ENCODE measurements at regions of chr18 and their contacts with region 1.

Region 1: DNA sequence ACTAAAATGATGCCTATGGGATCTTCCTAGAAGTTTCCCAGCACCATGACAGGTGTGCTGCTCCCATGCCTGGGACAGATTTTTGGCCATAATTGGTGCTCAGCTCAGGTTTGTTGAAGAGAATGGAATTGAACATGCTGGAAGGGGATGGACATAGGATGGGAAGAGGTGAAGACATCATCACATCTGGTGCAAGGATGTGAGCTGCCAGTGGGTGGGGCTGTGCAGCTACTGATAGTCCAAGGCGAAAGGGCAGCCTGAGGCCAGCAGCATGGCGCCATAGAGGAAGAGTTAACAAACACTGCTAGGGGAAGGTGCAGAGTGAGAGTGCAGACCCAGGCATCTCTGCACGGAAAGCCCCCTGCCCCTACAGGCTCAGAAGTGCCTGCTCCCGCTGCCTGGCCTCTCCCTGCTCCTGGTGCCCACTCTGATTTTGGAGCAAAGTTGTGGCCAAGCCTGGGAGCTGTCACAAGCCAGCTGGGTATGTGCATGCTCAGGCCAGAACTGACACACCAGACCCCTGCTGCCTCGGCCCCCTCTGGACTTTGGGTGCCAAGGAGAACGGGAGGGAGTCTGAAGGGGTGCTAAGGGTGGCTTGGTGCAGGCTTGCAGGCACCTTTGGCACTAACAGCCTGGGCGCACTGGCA is 178.6 kb downstream of the ZBTB7C start:
- DNase-seq: peak; percentile 34 to 84
- H3K4me3 ChIP-seq: no peak overlapping the region
- H3K27ac ChIP-seq: no peak overlapping the region
- H3K4me1 ChIP-seq: peaks cover 0 to 1% (median 0%) of the 10 kb centered on the region in 4 experiments; a peak in 1 of 7 replicates
- H3K27me3 ChIP-seq: no peaks in the 10 kb centered on the region
- CTCF ChIP-seq: peak; percentile 92 to 98 (median 97)
- EP300 ChIP-seq: no peak
- POLR2A ChIP-seq: no peak
- RAD21 ChIP-seq: peak; percentile 97

Region 2: DNA sequence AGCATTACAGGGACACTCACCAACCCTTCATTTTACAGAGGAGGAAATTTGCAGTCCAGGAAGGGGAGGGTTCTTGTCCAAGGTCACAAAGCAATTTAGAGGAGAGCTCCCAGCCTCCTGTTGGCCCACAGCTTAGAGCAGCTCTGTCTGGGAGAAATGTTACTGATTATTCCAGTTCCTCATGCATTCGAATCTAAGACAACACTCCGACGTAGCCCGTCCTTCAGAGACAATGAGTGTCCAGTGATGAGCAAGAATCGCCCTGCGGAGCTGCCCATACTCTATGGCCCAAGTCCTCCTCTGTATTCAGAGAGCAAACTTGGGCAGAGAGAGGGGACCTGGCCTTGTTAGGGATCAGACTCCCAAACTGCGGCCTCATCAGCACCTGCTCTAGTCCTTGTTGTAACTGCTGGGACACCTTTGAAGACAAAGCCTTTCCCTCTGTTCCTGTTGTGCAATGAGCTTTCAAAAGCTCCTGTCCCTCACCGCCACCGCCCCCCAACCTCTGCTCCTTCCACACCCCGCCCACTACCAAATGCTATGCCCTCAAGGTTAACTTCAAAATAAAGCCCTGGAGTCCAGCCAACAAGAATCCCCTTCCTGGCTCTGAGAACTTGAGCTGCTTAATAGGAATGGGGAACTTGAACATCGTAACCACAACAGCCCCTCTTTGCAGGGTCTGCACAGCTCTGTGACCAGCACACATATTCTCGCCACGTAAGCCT is 65.3 kb before region 1 on chr18:
- CTCF ChIA-PET with region 1: interaction called, 17 read pairs
- POLR2A ChIA-PET with region 1: no interaction called
- DNase-seq: no peak
- H3K4me3 ChIP-seq: no peak overlapping the region
- H3K27ac ChIP-seq: no peak overlapping the region
- H3K4me1 ChIP-seq: peaks cover 2 to 15% (median 7%) of the 10 kb centered on the region in 4 experiments
- H3K27me3 ChIP-seq: peaks cover 0 to 13% (median 7%) of the 10 kb centered on the region in 4 experiments; a peak in 6 of 7 replicates
- CTCF ChIP-seq: no peak
- EP300 ChIP-seq: no peak
- POLR2A ChIP-seq: no peak
- RAD21 ChIP-seq: no peak

Region 3: GRCh38 chr18:48250362-48250907 is 19.8 kb after region 1 on chr18:
- CTCF ChIA-PET with region 1: interaction called, 22 read pairs
- POLR2A ChIA-PET with region 1: no interaction called
- DNase-seq: no peak
- H3K4me3 ChIP-seq: no peak overlapping the region
- H3K27ac ChIP-seq: no peak overlapping the region
- H3K4me1 ChIP-seq: no peaks in the 10 kb centered on the region
- H3K27me3 ChIP-seq: no peaks in the 10 kb centered on the region
- CTCF ChIP-seq: no peak
- EP300 ChIP-seq: no peak
- POLR2A ChIP-seq: no peak
- RAD21 ChIP-seq: no peak

Region 4: DNA sequence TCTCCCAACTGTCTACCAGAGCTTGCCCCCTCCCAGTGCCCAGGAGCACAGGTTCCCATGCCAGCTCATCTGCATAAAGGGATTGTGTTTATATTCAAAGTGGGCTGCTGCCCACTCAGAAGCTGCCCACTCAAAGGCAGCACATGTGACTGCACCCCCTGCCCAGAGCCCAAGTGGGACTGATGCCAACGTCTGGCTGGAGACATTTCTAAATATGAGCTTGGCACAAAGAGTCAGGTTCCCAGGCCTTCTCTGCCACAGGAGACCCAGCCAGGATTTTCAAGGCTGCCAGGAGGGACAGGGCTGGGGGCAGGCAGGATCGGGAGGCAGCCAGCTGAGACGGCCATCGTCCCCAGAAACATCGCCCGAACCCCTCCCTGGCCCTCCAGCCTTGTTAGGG is 111.5 kb after region 1 on chr18:
- CTCF ChIA-PET with region 1: interaction called, 23 read pairs
- POLR2A ChIA-PET with region 1: no interaction called
- DNase-seq: no peak
- H3K4me3 ChIP-seq: no peak overlapping the region
- H3K27ac ChIP-seq: no peak overlapping the region
- H3K4me1 ChIP-seq: peaks cover 0 to 6% (median 2%) of the 10 kb centered on the region in 4 experiments; a peak in 4 of 7 replicates
- H3K27me3 ChIP-seq: no peaks in the 10 kb centered on the region; a peak in 1 of 7 replicates
- CTCF ChIP-seq: no peak
- EP300 ChIP-seq: no peak
- POLR2A ChIP-seq: no peak
- RAD21 ChIP-seq: no peak

Region 5: GRCh38 chr18:48428475-48429177 is 198.0 kb after region 1 on chr18:
- CTCF ChIA-PET with region 1: interaction called, 13 read pairs
- POLR2A ChIA-PET with region 1: no interaction called
- DNase-seq: no peak
- H3K4me3 ChIP-seq: no peak overlapping the region
- H3K27ac ChIP-seq: no peak overlapping the region
- H3K4me1 ChIP-seq: 0 out of 7 replicates have a peak, but pooled peaks cover 0 to 2% (median 0%) of the 10 kb centered on the region in 4 experiments
- H3K27me3 ChIP-seq: peaks cover 0 to 15% (median 3%) of the 10 kb centered on the region in 4 experiments; a peak in 4 of 7 replicates
- CTCF ChIP-seq: no peak
- EP300 ChIP-seq: no peak
- POLR2A ChIP-seq: no peak
- RAD21 ChIP-seq: no peak

Region 6: GRCh38 chr18:48470484-48471180 is 240.0 kb after region 1 on chr18:
- CTCF ChIA-PET with region 1: interaction called, 11 read pairs
- POLR2A ChIA-PET with region 1: no interaction called
- DNase-seq: no peak
- H3K4me3 ChIP-seq: no peak overlapping the region
- H3K27ac ChIP-seq: no peak overlapping the region
- H3K4me1 ChIP-seq: no peaks in the 10 kb centered on the region
- H3K27me3 ChIP-seq: no peaks in the 10 kb centered on the region
- CTCF ChIP-seq: no peak
- EP300 ChIP-seq: no peak
- POLR2A ChIP-seq: no peak
- RAD21 ChIP-seq: no peak

Measured in H1 (cell line).